ENCODE measurements at regions of chr9 and their contacts with region 1.

Region 1: DNA sequence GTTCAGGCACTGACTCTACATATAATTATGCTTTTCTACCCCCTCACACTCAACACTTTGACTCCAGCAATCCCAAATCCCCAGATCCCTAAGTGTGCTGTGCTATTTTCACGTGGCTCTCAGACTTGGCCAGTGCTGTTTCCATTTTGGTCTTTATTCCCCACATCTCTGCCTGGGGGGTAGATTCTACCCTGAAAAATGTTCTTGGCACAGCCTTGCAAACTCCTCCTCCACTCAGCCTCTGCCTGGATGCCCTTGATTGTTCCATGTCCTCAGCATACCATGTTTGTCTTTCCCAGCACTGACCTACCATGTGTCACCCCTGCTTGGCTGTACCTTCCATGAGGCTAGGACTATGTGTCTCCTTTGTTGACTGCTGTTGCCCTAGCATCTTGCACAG is 43.0 kb downstream of the FXN start:
- DNase-seq: peak in 4 of 5 donors; percentile 40 to 80 (median 54)
- ATAC-seq: peak; percentile 95 to 98 (median 97)
- H3K4me3 ChIP-seq: no peak overlapping the region
- H3K27ac ChIP-seq: peak overlapping the region; percentile 44 to 84 (median 75)
- H3K4me1 ChIP-seq: peaks cover 0 to 36% (median 15%) of the 10 kb centered on the region in 12 donors
- H3K27me3 ChIP-seq: no peaks in the 10 kb centered on the region
- CTCF ChIP-seq: no peak
- POLR2A ChIP-seq: no peak

Region 2: DNA sequence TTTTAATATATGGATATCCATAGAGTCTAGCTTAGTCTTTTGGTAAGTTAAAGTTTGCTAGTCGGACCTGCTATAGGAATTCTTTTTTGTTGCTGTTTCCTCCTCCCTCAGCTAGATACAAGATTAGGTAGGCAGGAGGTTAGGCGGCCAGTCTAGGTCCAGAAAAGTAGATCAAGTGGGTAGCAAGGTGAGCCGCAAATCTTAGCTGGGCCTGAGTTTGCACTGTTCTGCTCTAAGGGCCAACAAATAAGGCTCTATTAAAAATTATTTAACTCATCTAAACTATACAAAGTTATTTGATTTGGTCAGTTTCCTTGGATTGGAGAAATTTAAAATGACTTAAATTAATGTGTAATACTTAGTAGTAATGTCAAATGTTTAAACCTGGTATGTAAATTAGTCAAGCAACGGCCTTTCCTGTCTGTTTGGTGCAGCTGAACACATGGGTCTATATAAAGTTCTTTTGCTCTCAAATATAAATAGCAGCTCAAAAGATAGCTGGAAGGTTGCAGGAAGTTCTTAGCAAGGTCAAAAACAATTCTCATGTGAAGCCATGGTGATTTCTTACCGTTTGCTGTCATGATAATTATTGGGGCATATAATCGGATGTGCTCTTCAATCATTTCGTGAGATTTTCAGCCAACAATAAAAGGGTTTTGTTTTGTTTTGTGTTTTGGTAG is 136.7 kb before region 1 on chr9:
- intact Hi-C with region 1: no loop called
- DNase-seq: no peak
- ATAC-seq: peak; percentile 76 to 91 (median 86)
- H3K4me3 ChIP-seq: no peak overlapping the region
- H3K27ac ChIP-seq: peak overlapping the region; percentile 35 to 86 (median 72)
- H3K4me1 ChIP-seq: peaks cover 0 to 32% (median 7%) of the 10 kb centered on the region in 12 donors
- H3K27me3 ChIP-seq: no peaks in the 10 kb centered on the region
- CTCF ChIP-seq: no peak
- POLR2A ChIP-seq: no peak

Region 3: DNA sequence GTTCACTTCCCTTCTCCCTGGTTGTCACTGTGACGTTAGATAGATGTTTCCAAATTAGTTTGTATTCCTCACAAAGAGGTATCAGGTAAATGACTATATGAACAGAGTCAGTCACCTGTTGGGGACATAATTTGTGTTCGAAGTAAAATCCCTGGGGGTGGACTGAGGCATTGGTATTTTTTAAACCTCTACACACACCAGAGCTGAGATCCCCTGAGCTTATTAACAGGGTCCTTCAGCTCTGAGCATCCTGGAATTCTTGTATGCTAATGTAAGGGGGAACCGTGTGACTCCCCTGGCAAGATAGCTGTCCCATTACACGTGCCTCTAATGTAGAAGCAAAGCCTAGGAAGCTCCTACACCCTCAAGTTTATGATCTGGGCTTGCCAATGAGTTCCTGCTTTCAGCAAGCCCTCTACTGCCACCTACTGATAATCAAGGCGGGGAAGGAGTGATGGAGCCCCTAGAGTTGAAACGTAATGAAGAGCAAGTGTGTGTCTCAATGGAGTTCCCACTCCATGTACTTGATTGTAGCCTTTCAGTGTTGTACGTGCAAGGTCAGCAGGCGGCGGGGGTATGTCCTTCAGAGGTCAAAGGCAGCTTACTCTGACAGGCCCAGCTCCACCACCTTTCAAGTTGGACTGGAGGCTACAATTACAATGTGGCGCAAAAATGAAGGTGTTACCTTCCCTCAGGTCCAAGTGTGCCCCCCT is 79.0 kb before region 1 on chr9:
- intact Hi-C with region 1: no loop called
- DNase-seq: peak in 4 of 5 donors; percentile 52 to 72 (median 62)
- ATAC-seq: peak; percentile 82 to 93 (median 92)
- H3K4me3 ChIP-seq: no peak overlapping the region
- H3K27ac ChIP-seq: peak overlapping the region in 10 of 12 donors; percentile 9 to 69 (median 62)
- H3K4me1 ChIP-seq: peaks cover 0 to 41% (median 20%) of the 10 kb centered on the region in 12 donors
- H3K27me3 ChIP-seq: no peaks in the 10 kb centered on the region
- CTCF ChIP-seq: peak; percentile 72 to 87 (median 77)
- POLR2A ChIP-seq: no peak

Region 4: DNA sequence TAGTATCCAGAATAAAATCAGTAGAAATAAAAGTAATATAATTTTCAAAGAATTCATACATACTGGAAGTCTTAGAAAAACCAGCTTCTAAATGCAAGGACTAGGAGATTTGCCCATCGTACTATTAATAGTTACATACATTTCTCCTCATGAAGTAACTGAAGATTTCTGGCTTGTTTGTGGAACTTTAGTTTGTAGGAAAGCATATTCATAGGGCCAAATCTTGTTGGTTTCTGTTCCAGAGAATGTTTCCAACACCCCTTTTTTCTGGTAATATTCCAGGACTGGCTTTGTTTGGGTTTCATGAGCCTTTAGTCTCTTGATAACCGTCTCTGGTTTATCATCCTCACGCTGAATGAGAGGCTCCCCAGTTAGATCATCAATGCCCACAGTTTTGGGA is 29.2 kb after region 1 on chr9:
- intact Hi-C with region 1: no loop called
- DNase-seq: no peak
- ATAC-seq: no peak
- H3K4me3 ChIP-seq: no peak overlapping the region
- H3K27ac ChIP-seq: no peak overlapping the region
- H3K4me1 ChIP-seq: no peaks in the 10 kb centered on the region
- H3K27me3 ChIP-seq: no peaks in the 10 kb centered on the region
- CTCF ChIP-seq: no peak
- POLR2A ChIP-seq: no peak

Region 5: GRCh38 chr9:69121828-69122548 is 43.4 kb after region 1 on chr9:
- intact Hi-C with region 1: loop called in 4 of 10 experiments (anchors 2 to 5 kb)
- DNase-seq: peak; percentile 70 to 84 (median 78)
- ATAC-seq: peak; percentile 82 to 89 (median 84)
- H3K4me3 ChIP-seq: peak overlapping the region; percentile 63 to 87 (median 81)
- H3K27ac ChIP-seq: peak overlapping the region; percentile 70 to 96 (median 90)
- H3K4me1 ChIP-seq: peaks cover 0 to 17% (median 9%) of the 10 kb centered on the region in 12 donors
- H3K27me3 ChIP-seq: no peaks in the 10 kb centered on the region
- CTCF ChIP-seq: peak in 3 of 12 donors; percentile 1 to 32 (median 21)
- POLR2A ChIP-seq: no peak

Region 6: DNA sequence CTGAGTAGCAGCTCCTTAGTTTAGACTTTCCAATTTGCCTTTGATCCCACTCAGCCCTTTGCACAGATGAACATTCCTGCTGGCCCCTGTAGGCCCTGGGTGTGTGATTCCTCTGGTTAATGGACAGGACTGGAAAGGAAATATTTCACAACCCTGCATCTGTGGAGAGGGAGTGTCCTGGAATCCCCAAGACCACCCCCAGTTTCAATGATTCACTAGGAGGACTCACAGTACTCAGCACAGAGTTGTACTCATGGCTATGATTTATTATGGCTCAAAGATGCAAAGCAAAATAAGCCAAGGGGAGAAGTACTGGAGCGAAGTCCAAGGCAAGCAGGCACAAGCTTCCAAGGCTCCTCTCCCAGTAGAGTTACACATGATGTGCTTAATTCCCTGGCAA is 53.1 kb after region 1 on chr9:
- intact Hi-C with region 1: loop called in 4 of 10 experiments (anchors 5 to 10 kb)
- DNase-seq: no peak
- ATAC-seq: peak; percentile 31 to 72 (median 48)
- H3K4me3 ChIP-seq: no peak overlapping the region
- H3K27ac ChIP-seq: peak overlapping the region in 10 of 12 donors; percentile 55 to 85 (median 72)
- H3K4me1 ChIP-seq: peaks cover 3 to 71% (median 29%) of the 10 kb centered on the region in 12 donors
- H3K27me3 ChIP-seq: no peaks in the 10 kb centered on the region
- CTCF ChIP-seq: no peak
- POLR2A ChIP-seq: no peak

Region 7: DNA sequence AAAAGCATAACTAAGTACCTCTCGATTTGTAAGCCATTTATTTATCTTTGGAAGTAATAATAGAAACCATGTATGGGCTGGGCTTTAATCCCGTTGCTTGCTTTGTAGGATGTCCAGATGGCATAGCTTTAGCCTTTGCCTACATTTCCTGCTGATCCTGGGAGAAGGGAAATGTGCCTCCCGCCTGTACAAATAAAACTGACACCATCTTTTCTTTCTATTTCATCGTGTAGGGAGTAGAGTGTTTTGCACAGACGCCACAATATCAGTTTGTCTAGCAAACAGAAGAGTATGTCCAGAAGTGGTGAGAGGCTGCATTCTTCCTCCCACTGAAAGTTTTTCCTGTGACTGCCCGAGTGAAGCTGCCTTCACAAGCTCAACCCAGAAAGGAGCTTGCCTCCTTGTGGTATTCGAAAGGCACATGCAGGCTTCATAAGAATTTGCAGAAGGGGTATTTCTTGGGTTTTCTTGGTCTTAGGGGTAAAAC is 70.8 kb after region 1 on chr9:
- intact Hi-C with region 1: loop called in 1 of 10 experiments (anchors 10 kb)
- DNase-seq: peak in 2 of 5 donors; percentile 18 to 29
- ATAC-seq: peak in 3 of 4 donors; percentile 37 to 66 (median 66)
- H3K4me3 ChIP-seq: peak overlapping the region in 1 of 12 donors; percentile 10
- H3K27ac ChIP-seq: peak overlapping the region in 10 of 12 donors; percentile 24 to 76 (median 50)
- H3K4me1 ChIP-seq: peaks cover 0 to 29% (median 9%) of the 10 kb centered on the region in 12 donors
- H3K27me3 ChIP-seq: no peaks in the 10 kb centered on the region
- CTCF ChIP-seq: peak in 9 of 12 donors; percentile 17 to 55 (median 38)
- POLR2A ChIP-seq: no peak

Region 8: DNA sequence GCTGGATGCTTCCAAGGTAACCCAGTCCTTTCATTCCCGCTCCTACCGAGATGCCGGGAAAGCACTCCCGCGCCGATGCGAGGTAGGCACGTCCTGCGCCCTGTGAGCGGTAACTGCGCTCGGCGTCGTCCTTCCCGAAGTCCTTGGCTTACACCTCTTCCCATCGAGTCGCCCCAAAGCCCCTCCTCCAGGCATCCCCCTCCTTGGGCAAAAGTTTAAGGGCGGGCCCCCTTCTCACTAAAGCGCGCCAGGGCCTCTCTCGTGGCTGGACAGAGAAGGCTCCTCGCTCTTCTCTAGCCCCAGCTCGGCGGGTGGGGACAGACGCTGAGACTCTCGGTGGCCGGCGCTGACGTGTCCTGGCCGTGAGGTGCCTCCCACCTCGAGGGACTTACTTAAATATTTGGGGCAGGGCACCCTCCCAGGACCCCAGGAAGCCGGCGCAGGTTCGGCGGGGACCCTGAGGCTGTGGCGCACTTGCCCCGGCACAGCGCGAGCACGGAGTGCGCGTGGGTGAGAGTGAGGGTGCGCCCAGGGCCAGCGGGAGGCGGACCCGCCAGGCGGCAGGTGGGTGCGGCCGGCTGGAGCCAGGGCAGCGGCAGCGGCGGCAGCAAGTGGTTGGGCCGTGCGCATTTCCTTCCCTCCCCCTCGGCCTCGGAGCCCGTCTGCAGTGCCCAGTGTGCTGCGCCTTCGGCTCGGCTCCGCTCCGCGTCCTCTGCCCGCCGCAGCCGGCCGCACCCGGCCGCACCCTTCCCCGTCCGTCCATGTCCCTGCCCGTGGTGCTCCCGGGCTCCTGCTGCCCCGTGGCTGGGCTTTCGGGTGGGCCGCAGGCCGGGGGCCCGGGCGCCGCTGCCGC is 246.2 kb after region 1 on chr9 and contains the start of gene ENTREP1:
- intact Hi-C with region 1: no loop called
- DNase-seq: peak; percentile 75 to 86 (median 77)
- ATAC-seq: peak; percentile 71 to 97 (median 93)
- H3K4me3 ChIP-seq: peak within 1 kb of the TSS; percentile 51 to 87 (median 67)
- H3K27ac ChIP-seq: peak within 1 kb of the TSS; percentile 63 to 93 (median 88)
- H3K4me1 ChIP-seq: peaks cover 0 to 34% (median 4%) of the 10 kb centered on the region in 12 donors
- H3K27me3 ChIP-seq: peaks cover 0 to 23% (median 0%) of the 10 kb centered on the region in 9 donors
- CTCF ChIP-seq: peak in 7 of 12 donors; percentile 13 to 44 (median 35)
- POLR2A ChIP-seq: peak in 1 of 2 donors; percentile 41
- total RNA-seq, gene ENTREP1: 16.6 to 29.1 (median 24.8) TPM